PC-3 (cell line): ENCODE measurements at regions of chr7 and their contacts with region 1.

Region 1: DNA sequence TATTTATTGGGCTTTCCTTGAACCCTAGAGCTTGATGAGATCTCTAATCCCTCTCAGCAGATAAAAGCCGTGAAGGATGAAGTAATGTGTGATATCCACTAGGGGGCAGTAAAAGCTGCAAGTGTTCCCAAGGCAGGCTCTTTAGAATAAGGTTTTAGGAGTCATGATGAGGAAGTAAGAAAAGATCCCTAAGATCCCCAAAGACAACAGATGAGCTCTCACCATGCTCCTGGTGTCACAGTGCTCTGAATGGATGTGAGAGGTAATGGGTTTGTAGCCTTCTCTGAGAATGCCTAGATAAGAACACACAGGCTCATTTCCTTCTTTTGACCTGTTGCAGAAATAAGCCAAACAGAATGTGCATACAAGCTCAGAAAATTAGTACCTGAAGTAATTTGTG is 70.4 kb upstream of the ITPRID1 start:
- DNase-seq: peak; percentile 79
- ATAC-seq: peak; percentile 77
- H3K4me3 ChIP-seq: no peak overlapping the region
- H3K27ac ChIP-seq: no peak overlapping the region
- H3K4me1 ChIP-seq: no peaks in the 10 kb centered on the region
- H3K27me3 ChIP-seq: peaks cover 55% of the 10 kb centered on the region
- CTCF ChIP-seq: peak; percentile 81

Region 2: GRCh38 chr7:31204071-31204470 is 239.4 kb before region 1 on chr7:
- CTCF ChIA-PET with region 1: no interaction called
- POLR2A ChIA-PET with region 1: no interaction called
- intact Hi-C with region 1: no loop called
- DNase-seq: no peak
- ATAC-seq: no peak
- H3K4me3 ChIP-seq: no peak overlapping the region
- H3K27ac ChIP-seq: no peak overlapping the region
- H3K4me1 ChIP-seq: no peaks in the 10 kb centered on the region
- H3K27me3 ChIP-seq: peaks cover 41% of the 10 kb centered on the region
- CTCF ChIP-seq: no peak

Region 3: DNA sequence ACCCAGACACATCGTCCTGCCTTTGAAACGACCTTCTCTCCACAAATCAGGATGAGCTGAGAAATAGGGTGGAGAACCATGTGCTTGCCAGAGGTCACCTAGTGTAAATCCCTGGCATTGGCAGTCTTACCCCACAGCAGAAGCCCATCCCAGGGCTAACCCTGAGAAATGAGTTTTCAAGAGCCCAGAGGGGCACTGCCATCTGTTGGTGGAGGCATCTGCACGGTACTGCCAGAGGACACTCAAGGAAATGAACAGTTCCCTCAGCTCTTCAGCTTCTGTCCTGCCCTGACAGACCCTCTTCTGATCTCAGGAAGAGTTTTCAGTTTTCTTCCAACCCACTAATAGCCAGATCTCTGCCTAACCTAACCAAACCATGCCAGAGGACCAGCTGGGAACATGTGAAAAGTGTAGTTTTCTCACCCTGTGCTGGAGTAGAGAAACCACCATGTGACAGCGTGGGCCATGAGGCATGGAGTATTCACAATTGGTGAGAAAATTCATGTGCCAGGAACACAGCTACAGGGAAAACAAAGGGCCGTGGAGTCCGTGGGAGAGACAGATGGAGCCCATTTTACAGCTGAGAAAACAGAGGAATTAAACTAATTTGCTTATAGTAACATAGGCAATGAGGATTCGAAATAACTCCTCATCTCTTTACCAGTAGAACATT is 32.8 kb after region 1 on chr7:
- CTCF ChIA-PET with region 1: no interaction called
- POLR2A ChIA-PET with region 1: no interaction called
- intact Hi-C with region 1: loop called (anchors 1 kb)
- DNase-seq: peak; percentile 33
- ATAC-seq: peak; percentile 81
- H3K4me3 ChIP-seq: no peak overlapping the region
- H3K27ac ChIP-seq: no peak overlapping the region
- H3K4me1 ChIP-seq: no peaks in the 10 kb centered on the region
- H3K27me3 ChIP-seq: peaks cover 77% of the 10 kb centered on the region
- CTCF ChIP-seq: peak; percentile 51

Region 4: DNA sequence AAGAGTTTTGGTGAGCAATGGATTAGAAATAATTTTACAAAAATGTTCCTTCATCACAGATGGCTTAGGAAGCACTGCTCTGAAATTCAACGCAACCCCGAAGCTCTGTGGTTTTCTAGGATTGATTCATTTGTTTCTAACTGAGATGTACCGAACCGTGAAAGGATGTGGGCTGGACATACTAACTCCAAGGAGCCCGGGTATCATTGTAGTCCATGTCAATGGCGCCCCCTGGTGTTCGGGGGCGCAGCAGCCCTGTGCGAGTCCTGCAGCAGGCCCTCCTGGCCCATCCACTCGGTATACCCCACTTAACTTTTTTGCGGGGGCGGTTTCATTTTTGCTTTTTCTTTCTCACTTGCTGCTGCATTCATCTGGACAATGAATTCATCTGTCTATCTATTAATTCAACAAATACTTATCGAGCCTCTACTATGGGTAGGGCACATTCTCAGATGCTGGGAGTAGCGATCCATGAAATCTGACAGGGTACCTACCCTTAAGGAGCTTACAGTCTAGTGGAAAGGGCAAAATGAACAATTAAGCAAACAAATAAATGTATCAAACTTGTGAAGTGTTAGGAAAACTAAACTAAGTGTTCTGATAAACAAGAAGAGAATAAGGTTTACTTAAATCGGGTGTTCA is 45.2 kb after region 1 on chr7:
- CTCF ChIA-PET with region 1: interaction called, 8 read pairs
- POLR2A ChIA-PET with region 1: no interaction called
- intact Hi-C with region 1: loop called (anchors 1 kb)
- DNase-seq: peak; percentile 87
- ATAC-seq: peak; percentile 100
- H3K4me3 ChIP-seq: no peak overlapping the region
- H3K27ac ChIP-seq: no peak overlapping the region
- H3K4me1 ChIP-seq: peaks cover 9% of the 10 kb centered on the region; the same call in 1 of the 2 replicates
- H3K27me3 ChIP-seq: no peaks in the 10 kb centered on the region
- CTCF ChIP-seq: peak; percentile 92

Region 5: GRCh38 chr7:31633894-31634494 is 190.5 kb after region 1 on chr7:
- CTCF ChIA-PET with region 1: interaction called, 6 read pairs
- POLR2A ChIA-PET with region 1: no interaction called
- intact Hi-C with region 1: loop called (anchors 1 kb)
- DNase-seq: peak; percentile 80
- ATAC-seq: peak; percentile 90
- H3K4me3 ChIP-seq: no peak overlapping the region
- H3K27ac ChIP-seq: no peak overlapping the region
- H3K4me1 ChIP-seq: no peaks in the 10 kb centered on the region
- H3K27me3 ChIP-seq: peaks cover 46% of the 10 kb centered on the region
- CTCF ChIP-seq: peak; percentile 76

Region 6: DNA sequence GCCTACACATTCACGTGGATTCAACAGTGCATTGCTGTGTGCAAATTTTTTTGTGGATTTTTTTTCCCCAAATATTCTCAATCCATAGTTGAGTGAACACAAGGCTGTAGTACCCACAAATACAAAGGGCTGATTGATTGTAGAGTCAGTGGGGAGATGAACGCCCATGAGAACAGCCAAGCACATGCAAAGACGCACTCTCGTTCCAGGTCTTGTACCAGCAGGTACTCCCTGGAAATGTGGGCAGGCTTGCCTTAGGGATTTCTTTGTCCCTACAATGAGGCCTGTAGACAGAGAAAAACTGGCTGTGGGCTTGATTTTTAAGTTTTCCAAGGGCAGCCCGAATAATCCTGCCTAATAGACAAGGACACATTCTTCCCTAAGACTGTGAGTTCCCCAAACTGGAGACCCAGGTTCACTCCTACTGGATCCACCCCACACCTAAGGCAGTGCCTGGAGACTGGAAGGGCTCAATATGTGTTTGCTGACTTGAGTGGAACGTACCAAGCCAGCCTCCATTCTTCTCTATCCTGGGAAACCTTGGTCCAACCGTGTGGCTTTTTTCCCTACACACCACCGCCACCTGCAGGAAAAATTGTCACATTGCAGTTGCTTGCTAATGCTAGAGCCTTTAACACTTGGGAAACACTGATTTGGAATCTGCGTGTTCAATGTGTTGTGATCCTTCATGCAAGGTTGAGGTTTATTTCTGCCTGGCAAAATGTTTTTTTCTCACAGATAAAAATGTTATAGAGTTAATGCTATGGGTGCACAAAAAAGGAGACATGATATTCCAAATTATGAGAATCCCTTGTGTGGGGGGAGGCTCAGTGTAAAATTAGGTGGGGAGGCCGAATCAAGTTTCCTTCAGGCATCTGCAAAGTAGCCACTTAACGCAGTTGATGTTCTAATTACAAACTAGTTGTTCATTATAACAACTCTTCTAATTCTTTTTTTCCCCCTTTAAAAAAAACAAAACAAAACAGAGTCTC is 292.8 kb after region 1 on chr7:
- CTCF ChIA-PET with region 1: no interaction called
- POLR2A ChIA-PET with region 1: no interaction called
- intact Hi-C with region 1: loop called (anchors 5 kb)
- DNase-seq: peak; percentile 79
- ATAC-seq: peak; percentile 95
- H3K4me3 ChIP-seq: no peak overlapping the region
- H3K27ac ChIP-seq: no peak overlapping the region
- H3K4me1 ChIP-seq: no peaks in the 10 kb centered on the region
- H3K27me3 ChIP-seq: no peaks in the 10 kb centered on the region
- CTCF ChIP-seq: peak; percentile 84

Region 7: DNA sequence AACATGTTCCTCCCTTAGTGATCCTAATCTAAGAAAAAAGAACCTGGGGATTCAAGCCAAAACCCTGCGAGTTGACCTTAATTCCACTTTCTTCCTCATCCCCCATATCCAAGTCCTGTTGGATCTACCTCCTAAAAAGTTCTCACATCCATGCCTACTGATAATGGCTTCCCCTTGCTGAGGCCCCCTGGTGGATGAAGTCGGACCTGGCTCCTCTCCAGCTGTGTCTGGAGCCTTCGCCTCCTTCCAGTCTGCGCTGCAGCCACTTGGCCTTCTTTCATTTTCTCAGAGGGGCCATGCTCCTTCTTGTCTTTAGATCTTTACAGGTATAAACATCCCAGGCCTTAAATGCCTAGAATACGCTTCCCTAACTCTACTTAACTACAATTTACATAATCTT is 618.7 kb after region 1 on chr7:
- CTCF ChIA-PET with region 1: no interaction called
- POLR2A ChIA-PET with region 1: no interaction called
- intact Hi-C with region 1: no loop called
- DNase-seq: peak; percentile 64
- ATAC-seq: peak; percentile 24; the same call in 1 of the 2 replicates
- H3K4me3 ChIP-seq: no peak overlapping the region
- H3K27ac ChIP-seq: no peak overlapping the region
- H3K4me1 ChIP-seq: peaks cover 19% of the 10 kb centered on the region
- H3K27me3 ChIP-seq: no peaks in the 10 kb centered on the region
- CTCF ChIP-seq: peak; percentile 72